ENCODE measurements at regions of chr14 and their contacts with region 1.

Region 1: DNA sequence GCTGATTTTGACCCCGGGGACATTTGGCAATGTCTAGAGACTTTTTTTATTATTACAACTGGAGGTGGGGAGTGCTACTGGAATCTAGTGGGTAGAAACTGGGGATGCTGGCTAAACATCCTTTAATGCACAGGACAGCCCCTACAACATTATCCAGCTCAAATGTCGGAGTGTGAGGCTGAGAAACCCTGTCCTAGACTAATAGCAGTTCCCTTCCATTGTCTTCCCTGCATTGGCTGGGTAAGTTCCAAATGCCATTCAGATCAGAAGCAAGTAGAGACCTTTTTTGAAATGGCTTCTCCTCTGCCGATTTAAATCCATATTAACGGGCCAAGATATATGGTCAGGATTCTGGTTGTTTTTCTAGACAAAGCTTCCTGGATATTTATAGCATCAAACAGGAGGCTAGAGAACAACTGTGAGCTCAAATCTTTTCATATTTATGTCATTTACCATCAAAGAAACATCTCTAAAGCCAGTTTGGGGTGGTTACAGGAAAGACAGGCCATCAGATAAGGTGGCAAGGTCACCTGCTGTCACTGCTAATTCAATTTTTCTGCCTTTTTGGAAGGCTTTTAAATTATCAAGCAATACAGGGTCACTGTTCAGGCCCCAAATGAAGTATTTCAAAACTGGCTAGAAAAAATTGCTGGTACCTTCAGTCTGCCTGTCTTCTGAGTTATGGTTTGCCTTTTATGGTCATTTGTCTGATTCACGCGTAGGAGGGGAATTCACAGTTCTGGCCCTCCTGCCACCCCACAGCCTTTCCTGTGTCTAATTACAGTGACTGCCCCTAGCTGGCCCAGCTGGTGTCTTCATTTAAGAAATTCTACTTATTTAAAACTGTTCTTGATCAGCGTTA is 20.1 kb upstream of the AKAP5 start:
- DNase-seq: peak; percentile 64
- H3K4me3 Mint-ChIP-seq: no peak overlapping the region
- H3K27ac Mint-ChIP-seq: peak overlapping the region; percentile 74
- H3K4me1 Mint-ChIP-seq: peaks cover 35% of the 10 kb centered on the region
- H3K27me3 Mint-ChIP-seq: no peaks in the 10 kb centered on the region

Region 2: GRCh38 chr14:64324895-64325294 is 120.3 kb before region 1 on chr14:
- CTCF ChIA-PET with region 1: no interaction called
- POLR2A ChIA-PET with region 1: no interaction called
- DNase-seq: no peak
- H3K4me3 Mint-ChIP-seq: no peak overlapping the region
- H3K27ac Mint-ChIP-seq: no peak overlapping the region
- H3K4me1 Mint-ChIP-seq: no peaks in the 10 kb centered on the region
- H3K27me3 Mint-ChIP-seq: peaks cover 17% of the 10 kb centered on the region

Region 3: GRCh38 chr14:64434528-64434927 is 10.7 kb before region 1 on chr14:
- CTCF ChIA-PET with region 1: interaction called, 16 read pairs
- POLR2A ChIA-PET with region 1: interaction called, 6 read pairs
- DNase-seq: no peak
- H3K4me3 Mint-ChIP-seq: no peak overlapping the region
- H3K27ac Mint-ChIP-seq: no peak overlapping the region
- H3K4me1 Mint-ChIP-seq: peaks cover 18% of the 10 kb centered on the region
- H3K27me3 Mint-ChIP-seq: no peaks in the 10 kb centered on the region

Region 4: DNA sequence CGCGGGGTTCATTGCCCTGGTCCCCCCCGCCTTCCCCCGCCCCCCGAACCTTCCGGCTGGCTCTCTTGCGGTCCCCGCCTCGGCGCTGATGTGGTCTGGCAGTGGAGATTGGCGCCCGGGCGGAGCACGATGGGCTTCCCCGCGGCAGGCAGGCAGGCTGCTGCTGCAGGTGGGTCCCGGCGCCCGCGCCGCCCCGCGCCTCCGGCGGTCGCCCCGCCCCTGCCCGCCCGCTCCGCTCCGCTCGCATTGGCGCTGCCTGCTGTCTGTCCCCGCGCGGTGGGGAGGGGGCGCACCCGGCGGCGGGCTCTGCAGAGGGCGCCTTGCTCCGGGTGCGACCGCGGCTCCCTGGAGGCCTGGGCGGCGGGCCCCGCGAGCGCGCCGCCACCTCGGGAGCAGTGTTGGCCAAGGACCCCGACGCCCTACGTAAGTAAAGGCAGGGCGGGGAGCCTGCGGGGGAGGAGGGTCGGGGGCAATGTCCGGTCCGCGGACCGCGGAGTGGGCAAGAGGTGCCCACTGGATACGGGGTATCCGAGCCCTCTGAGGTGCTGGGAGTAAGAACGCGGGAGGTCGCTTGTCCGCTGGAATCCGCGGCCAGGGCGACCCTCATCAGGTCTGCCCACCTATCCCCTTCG is 20.1 kb after region 1 on chr14 and contains the start of gene AKAP5:
- CTCF ChIA-PET with region 1: no interaction called
- POLR2A ChIA-PET with region 1: interaction called, 10 read pairs
- DNase-seq: peak; percentile 66
- H3K4me3 Mint-ChIP-seq: peak within 1 kb of the TSS; percentile 78
- H3K27ac Mint-ChIP-seq: no peak within 1 kb of the TSS
- H3K4me1 Mint-ChIP-seq: peaks cover 33% of the 10 kb centered on the region
- H3K27me3 Mint-ChIP-seq: peaks cover 4% of the 10 kb centered on the region
- total RNA-seq, gene AKAP5: 0.88 TPM

Measured in activated CD4-positive, alpha-beta memory T cell treated with anti-CD3 and anti-CD28 coated beads, Interleukin-2, amount 10 ng/mL, durations not matched to agents 7 days and 5 days (primary cell).